Panc1 (cell line): ENCODE measurements at regions of chr1 and their contacts with region 1.

Region 1: GRCh38 chr1:159071970-159072582 is 4.5 kb downstream of the AIM2 start:
- DNase-seq: peak; percentile 30
- ATAC-seq: peak; percentile 78
- H3K4me3 ChIP-seq: no peak overlapping the region
- H3K27ac ChIP-seq: no peak overlapping the region
- H3K4me1 ChIP-seq: no peaks in the 10 kb centered on the region
- H3K27me3 ChIP-seq: peaks cover 2% of the 10 kb centered on the region; the same call in 1 of the 2 replicates
- CTCF ChIP-seq: peak; percentile 69; the same call in 1 of the 2 replicates

Region 2: DNA sequence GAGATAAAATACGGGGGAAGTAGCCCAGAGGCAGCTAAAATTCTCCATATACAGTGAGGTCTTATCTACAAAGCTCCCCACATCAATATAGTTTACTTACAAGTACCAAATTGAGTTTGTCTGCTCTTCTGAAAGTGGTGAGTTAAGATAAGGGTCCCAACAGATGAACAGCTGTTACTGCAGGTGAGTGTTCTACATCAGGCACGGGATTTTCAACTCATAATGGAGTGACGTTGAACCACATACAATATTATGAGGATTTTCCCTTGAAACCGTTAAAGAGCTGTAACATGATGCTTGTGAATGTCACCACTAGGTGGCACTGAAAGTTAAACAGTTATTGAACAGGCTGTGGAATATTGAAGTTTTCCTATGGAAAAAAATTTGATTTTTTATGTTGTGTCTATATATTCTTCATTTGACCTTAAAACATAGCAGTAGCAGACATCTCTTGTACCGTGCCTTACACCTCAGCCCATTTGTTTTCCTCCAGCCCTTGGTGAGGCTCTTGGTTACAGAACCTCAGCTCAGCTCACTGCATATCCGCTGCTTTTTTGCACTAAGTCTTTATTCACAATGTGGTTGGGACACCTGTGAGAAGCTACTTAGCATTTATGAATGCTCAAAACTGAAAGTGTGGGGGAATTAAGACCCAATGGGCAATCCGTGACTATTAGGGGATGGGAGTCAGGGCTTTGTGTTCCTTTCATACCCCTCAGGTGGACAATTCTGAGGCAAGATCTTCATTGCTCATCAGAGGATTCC is 868.2 kb before region 1 on chr1:
- CTCF ChIA-PET with region 1: no interaction called
- POLR2A ChIA-PET with region 1: no interaction called
- in situ Hi-C with region 1: no loop called
- intact Hi-C with region 1: loop called (anchors 5 kb)
- DNase-seq: peak; percentile 33
- ATAC-seq: peak; percentile 95
- H3K4me3 ChIP-seq: no peak overlapping the region
- H3K27ac ChIP-seq: no peak overlapping the region
- H3K4me1 ChIP-seq: no peaks in the 10 kb centered on the region; the same call in 1 of the 2 replicates
- H3K27me3 ChIP-seq: no peaks in the 10 kb centered on the region; the same call in 1 of the 2 replicates
- CTCF ChIP-seq: peak; percentile 78

Region 3: GRCh38 chr1:158706096-158706495 is 366.0 kb before region 1 on chr1:
- CTCF ChIA-PET with region 1: interaction called, 10 read pairs
- POLR2A ChIA-PET with region 1: no interaction called
- in situ Hi-C with region 1: no loop called
- intact Hi-C with region 1: no loop called
- DNase-seq: no peak
- ATAC-seq: no peak
- H3K4me3 ChIP-seq: no peak overlapping the region
- H3K27ac ChIP-seq: no peak overlapping the region
- H3K4me1 ChIP-seq: no peaks in the 10 kb centered on the region
- H3K27me3 ChIP-seq: no peaks in the 10 kb centered on the region
- CTCF ChIP-seq: no peak

Region 4: DNA sequence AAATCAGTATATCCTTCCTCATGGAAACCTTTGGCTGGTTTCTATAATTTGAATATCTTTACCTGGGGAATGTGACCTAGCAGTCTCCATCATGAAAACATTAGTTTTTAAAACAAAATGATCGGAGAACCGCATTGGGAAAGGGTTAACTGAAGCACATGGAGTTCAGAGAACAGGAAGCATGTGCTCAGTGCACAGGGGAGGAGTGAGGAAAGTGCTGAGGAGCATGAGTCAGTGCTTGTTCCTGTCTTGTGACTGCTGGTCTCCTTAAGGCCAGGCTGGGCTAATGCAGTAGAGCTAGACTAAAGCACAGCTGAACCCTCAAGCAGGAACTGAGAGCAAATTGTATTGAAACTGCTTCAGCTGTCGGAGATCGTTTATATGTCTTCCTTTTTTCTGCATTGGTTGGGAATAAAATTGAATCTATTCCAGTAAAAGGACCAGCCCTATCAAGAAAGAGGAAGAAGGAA is 56.6 kb before region 1 on chr1:
- CTCF ChIA-PET with region 1: no interaction called
- POLR2A ChIA-PET with region 1: no interaction called
- in situ Hi-C with region 1: no loop called
- intact Hi-C with region 1: no loop called
- DNase-seq: no peak
- ATAC-seq: no peak
- H3K4me3 ChIP-seq: no peak overlapping the region
- H3K27ac ChIP-seq: no peak overlapping the region
- H3K4me1 ChIP-seq: no peaks in the 10 kb centered on the region
- H3K27me3 ChIP-seq: peaks cover 2% of the 10 kb centered on the region
- CTCF ChIP-seq: no peak